Mucosa of descending colon (tissue), 3 donors: ENCODE measurements at regions of chr5 and their contacts with region 1.

Region 1: DNA sequence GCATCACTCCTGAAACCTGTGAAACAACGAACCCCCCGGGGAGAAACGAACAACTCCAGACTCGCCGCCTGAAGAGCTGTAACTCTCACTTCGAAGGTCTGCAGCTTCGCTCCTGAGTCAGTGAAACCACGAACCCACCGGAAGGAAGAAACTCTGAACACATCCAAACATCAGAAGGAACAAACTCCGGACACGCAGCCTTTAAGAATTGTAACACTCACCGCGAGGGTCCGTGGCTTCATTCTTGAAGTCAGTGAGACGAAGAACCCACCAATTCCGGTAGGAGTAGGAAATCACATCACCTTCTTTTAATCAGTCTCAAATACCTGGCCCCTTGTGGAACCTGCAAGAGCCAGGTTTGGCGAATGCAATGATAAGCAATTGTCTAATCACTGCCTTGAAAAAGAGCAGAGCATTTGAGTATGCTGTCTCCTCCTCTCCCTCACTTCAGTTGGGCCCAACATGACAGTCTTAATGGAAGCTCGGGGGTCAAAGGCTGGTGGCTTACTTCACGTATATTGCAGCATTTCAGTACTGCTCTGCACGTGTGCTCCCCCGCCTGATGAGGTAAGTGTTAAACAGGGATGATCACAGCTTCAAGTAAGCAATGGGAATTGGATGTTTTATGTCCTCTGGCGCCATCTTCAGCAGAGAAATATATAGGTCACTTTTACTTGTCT is 473 bp downstream of the IRGM start:
- DNase-seq: peak in 1 of 3 donors; percentile 84
- ATAC-seq: peak; percentile 96
- H3K4me3 ChIP-seq: no peak overlapping the region
- H3K4me1 ChIP-seq: no peaks in the 10 kb centered on the region
- CTCF ChIP-seq: peak; percentile 50

Region 2: DNA sequence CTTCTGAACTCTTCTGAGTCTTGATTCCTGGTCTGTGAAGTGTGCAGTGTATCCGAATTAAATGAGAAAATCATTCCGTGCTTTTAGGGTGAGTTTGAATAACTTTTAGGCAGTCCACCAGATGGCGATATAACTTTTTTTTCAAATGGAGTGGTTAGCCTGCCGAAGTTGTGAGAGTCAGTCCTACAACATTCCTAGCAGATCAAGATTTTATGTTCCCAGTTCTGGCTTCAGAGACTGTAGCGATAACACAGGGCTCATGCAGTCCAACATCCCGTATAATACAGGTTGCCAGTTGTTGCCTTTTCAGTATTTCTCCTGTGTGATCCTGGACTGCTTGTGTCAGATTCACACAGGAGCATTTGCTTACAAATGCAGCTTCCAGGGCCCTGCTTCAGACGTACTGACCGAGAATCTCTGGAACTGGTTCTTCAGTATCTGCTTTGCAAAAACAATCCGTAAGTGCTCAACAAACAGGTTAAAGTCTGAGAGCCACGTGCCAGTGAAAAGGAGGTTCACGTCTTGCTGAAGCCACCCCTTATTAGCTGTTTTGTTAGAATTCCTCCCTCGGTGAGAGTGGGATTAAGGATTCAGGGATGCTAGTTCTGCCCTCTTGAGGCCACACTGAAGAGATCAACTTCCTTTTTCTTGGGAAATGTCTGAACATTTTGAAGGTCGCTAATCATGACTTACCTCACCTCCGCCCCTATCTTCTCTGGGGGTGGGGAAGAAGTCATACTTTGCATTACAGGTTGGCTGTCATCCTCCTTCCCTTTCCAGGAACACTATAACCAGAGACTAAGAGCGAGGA is 45.5 kb before region 1 on chr5:
- intact Hi-C with region 1: loop called in 1 of 2 experiments (anchors 1 kb)
- DNase-seq: peak in 1 of 3 donors; percentile 28
- ATAC-seq: peak; percentile 93
- H3K4me3 ChIP-seq: no peak overlapping the region
- H3K4me1 ChIP-seq: no peaks in the 10 kb centered on the region
- CTCF ChIP-seq: peak; percentile 28

Region 3: GRCh38 chr5:150816946-150817345 is 29.8 kb before region 1 on chr5:
- intact Hi-C with region 1: no loop called
- DNase-seq: no peak
- ATAC-seq: no peak
- H3K4me3 ChIP-seq: no peak overlapping the region
- H3K4me1 ChIP-seq: peaks cover 2% of the 10 kb centered on the region
- CTCF ChIP-seq: no peak

Region 4: GRCh38 chr5:151020304-151021110 is 173.7 kb after region 1 on chr5 and contains the start of gene GPX3:
- intact Hi-C with region 1: no loop called
- DNase-seq: peak; percentile 84 to 88 (median 86)
- ATAC-seq: peak; percentile 82
- H3K4me3 ChIP-seq: peak within 1 kb of the TSS; percentile 18
- H3K4me1 ChIP-seq: no peaks in the 10 kb centered on the region
- CTCF ChIP-seq: no peak
- total RNA-seq, gene GPX3: 44.6 to 460 (median 147) TPM

Region 5: DNA sequence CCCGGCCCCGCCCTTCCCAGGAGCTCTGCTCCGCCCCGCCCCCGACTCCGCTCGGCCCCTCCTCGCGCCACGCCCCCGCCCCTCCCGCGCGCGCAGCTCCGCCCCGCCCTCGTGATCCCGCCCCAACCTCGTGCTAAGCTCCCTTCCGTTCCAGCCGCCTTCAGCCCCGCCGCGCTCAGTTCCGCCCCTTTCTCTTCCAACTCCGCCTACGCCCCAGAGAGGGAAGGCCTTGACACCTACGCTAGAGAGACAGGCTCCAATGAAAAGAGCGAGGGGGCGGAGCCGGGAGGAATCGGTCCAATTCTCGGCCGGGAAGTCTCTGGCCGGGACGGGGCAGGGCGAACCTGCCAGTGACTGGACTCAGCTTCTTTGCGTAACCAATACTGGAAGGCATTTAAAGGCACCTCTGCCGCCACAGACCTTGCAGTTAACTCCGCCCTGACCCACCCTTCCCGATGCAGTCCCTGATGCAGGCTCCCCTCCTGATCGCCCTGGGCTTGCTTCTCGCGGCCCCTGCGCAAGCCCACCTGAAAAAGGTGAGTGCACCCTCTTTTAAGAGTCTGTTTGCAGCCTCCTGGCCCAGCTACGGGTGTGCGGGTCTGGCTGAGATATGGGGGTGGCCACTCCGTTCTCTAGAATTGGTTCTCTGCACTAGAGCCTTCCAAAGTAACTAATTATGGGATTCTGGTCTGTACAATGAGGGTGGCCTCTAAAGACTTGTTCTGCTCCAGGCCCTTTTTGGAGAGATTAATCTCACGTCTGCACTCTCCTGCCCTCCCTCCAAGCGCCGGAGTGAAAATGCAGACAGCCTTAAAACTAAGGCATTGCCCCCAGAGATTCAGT is 406.2 kb after region 1 on chr5 and contains the start of gene GM2A:
- intact Hi-C with region 1: no loop called
- DNase-seq: peak; percentile 99 to 100 (median 99)
- ATAC-seq: peak; percentile 96
- H3K4me3 ChIP-seq: peak within 1 kb of the TSS; percentile 15
- H3K4me1 ChIP-seq: peaks cover 5% of the 10 kb centered on the region
- CTCF ChIP-seq: no peak
- total RNA-seq, gene GM2A: 22.0 to 32.1 (median 30.9) TPM